ENCODE measurements at regions of chrX and their contacts with region 1.

Region 1: DNA sequence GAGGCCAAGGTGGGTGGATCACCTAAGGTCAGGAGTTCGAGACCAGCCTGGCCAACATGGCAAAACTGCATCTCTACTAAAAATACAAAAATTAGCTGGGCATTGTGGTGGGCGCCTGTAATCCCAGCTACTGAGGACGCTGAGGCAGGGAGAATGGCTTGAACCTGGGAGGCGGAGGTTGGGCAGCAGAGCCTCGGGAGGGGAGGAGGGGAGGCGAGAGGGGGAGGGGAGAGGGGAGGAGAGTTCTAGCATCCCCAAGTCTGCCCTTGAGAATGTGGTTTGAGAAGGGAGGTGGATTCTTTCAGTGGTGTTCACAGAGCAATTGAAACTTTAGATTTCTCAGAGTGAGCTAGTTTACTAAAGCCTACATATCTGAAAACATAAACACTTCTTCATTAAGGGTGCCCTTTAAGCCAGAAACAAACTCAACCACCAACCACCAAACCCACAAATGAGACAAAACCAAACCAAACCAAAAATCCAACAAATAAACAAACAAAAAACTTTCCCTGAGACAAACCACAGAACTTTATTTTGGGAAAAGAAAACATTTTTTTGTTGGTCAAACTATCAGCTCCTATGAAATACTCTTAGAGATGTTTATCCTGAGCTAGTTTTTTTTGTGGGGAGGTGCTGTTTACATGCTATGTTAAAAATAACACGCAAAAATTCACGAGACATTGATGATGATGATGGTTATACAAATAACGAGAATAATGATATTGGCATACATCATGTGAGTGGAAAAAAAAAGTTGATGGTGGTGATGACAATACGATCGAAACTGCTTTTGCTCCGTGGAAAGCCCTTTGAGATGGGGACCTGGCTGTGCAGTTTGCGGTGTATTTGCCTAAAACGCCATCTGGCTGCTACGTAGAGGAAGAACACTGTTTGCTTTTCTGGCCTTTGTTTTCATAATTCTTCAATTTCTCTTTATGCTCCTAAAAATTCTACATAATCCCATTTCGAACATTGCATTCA is 98.2 kb upstream of the PRKX start:
- DNase-seq: peak in 1 of 2 donors; percentile 31
- H3K4me3 ChIP-seq: no peak overlapping the region
- H3K27ac ChIP-seq: no peak overlapping the region
- H3K4me1 ChIP-seq: peaks cover 5 to 13% of the 10 kb centered on the region in 2 donors
- H3K27me3 ChIP-seq: no peaks in the 10 kb centered on the region
- CTCF ChIP-seq: peak in 4 of 6 experiments; percentile 54 to 68 (median 62)
- POLR2A ChIP-seq: no peak

Region 2: DNA sequence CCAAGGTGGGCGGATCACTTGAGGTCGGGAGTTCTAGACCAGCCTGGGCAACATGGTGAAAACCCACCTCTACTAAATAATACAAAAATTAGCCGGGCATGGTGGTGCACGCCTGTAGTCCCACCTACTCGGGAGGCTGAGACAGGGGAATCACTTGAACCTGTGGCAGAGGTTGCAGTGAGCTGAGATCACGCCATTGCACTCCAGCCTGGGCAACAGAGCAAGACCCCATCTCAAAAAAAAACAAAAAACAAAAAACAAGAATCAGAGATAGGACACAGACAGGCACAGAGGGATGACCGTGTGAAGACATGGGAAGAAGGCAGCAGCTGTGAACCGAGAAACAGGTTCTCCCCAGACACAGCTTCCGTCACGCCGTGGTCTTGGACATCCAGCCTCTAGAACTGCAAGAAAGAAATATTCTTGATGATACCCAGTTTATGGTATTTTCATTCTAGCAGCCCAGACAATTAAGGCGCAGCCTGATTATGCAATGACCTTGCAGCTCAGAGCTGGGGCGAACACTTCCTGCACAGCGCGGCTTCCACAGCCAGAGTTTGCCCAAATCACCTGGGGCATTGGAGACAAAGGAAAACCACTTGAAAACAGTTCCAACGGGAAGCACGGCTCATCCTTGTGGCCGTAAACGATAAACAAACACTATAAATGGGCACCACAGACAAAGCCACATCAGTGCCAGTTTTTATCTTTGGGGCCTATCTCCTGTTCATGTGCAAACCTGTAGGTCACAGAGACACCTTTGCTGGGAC is 878.3 kb before region 1 on chrX:
- intact Hi-C with region 1: loop called (anchors 10 kb)
- DNase-seq: no peak
- H3K4me3 ChIP-seq: no peak overlapping the region
- H3K27ac ChIP-seq: no peak overlapping the region
- H3K4me1 ChIP-seq: no peaks in the 10 kb centered on the region
- H3K27me3 ChIP-seq: no peaks in the 10 kb centered on the region
- CTCF ChIP-seq: no peak
- POLR2A ChIP-seq: no peak

Region 3: DNA sequence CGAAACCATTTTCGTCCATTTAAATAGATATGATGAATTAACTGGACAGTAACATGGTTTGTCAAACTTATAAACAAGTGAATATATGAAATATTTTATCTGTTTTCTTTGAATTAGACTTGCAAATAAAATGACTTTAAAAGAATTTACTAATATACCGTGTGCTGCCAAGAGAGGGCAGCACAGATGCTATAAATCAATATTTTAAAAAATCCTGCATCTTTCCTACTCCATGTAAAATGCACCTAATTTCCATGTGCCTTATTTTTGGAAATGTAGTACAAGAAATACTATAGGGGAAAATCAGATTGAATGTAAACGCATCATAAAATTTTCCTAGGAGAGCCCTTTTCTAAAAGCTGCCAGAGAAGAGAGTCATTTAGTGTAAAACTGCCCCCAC is 160.3 kb before region 1 on chrX:
- intact Hi-C with region 1: loop called (anchors 5 kb)
- DNase-seq: peak in 1 of 2 donors; percentile 6
- H3K4me3 ChIP-seq: no peak overlapping the region
- H3K27ac ChIP-seq: no peak overlapping the region
- H3K4me1 ChIP-seq: no peaks in the 10 kb centered on the region
- H3K27me3 ChIP-seq: no peaks in the 10 kb centered on the region
- CTCF ChIP-seq: peak; percentile 18 to 60 (median 34)
- POLR2A ChIP-seq: no peak

Region 4: DNA sequence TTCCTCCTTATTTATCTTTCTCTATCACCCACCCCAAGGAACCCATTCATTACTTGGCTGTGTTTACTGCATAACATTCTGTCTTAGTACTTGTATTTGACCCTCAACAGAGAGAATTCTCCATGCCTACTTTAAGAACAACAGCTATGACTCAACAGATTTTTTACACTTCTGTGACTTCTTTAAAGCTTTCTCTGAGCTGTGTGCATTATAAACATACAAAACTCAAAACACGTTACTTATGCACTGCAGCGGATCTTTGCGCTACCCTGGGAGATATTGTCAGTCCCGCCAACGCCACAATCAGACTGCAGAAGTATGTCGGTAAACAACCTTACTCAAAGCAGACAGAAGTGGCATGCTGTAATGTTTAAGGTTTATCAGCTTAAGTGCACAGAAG is 133.3 kb before region 1 on chrX:
- intact Hi-C with region 1: no loop called
- DNase-seq: no peak
- H3K4me3 ChIP-seq: no peak overlapping the region
- H3K27ac ChIP-seq: peak overlapping the region; percentile 26 to 67 (median 56)
- H3K4me1 ChIP-seq: peaks cover 15 to 20% of the 10 kb centered on the region in 2 donors
- H3K27me3 ChIP-seq: no peaks in the 10 kb centered on the region
- CTCF ChIP-seq: no peak
- POLR2A ChIP-seq: no peak

Region 5: GRCh38 chrX:3713225-3713936 is 98.2 kb before region 1 on chrX and contains the start of gene PRKX:
- intact Hi-C with region 1: loop called (anchors 10 kb)
- DNase-seq: peak; percentile 52 to 56
- H3K4me3 ChIP-seq: peak within 1 kb of the TSS; percentile 33 to 80 (median 55)
- H3K27ac ChIP-seq: peak within 1 kb of the TSS; percentile 74 to 93 (median 90)
- H3K4me1 ChIP-seq: peaks cover 5 to 10% of the 10 kb centered on the region in 2 donors
- H3K27me3 ChIP-seq: no peaks in the 10 kb centered on the region
- CTCF ChIP-seq: no peak
- POLR2A ChIP-seq: peak in 1 of 2 donors; percentile 83
- total RNA-seq, gene PRKX: 99.9 to 145 (median 129) TPM

Region 6: DNA sequence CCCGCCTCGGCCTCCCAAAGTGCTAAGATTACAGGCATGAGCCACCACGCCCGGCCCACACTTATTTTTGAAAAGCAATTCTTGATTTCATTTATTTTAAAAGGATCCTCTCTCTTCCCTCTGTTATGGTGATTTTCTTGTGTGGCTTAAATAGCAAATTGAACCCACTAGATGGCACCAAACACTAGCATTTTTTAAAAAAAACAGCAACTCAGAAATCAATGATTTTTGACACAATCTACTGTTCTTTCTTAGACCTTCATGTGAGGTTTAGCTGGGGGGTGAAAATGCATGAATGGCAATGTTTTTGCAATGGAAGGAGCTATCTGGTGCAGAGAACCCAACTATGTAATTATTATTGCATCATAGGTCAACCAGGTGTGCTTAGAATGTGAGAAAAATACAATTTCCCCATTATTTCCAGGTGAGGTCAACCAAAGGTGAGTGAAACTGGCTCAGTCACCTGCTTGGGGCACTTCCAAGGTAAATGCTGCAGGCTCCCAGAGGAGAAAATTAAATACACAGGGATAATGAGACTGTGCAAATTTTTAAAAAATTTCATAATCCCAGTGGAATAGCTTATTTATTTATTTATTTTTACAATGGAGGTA is 128.5 kb after region 1 on chrX:
- intact Hi-C with region 1: no loop called
- DNase-seq: no peak
- H3K4me3 ChIP-seq: no peak overlapping the region
- H3K27ac ChIP-seq: no peak overlapping the region
- H3K4me1 ChIP-seq: no peaks in the 10 kb centered on the region
- H3K27me3 ChIP-seq: no peaks in the 10 kb centered on the region
- CTCF ChIP-seq: peak in 3 of 6 experiments; percentile 15 to 46 (median 42)
- POLR2A ChIP-seq: no peak

Measured in thyroid gland (tissue), 4 donors.